B cell (primary cell): ENCODE measurements at regions of chr7 and their contacts with region 1.

Region 1: GRCh38 chr7:149090397-149091195 is at the start of gene ZNF786:
- DNase-seq: peak; percentile 95
- ATAC-seq: peak; percentile 86
- H3K4me3 ChIP-seq: peak within 1 kb of the TSS; percentile 72 to 96 (median 80)
- H3K4me3 Mint-ChIP-seq: peak within 1 kb of the TSS; percentile 95
- H3K27ac ChIP-seq: peak within 1 kb of the TSS; percentile 90 to 93
- H3K27ac Mint-ChIP-seq: peak within 1 kb of the TSS; percentile 99
- H3K4me1 ChIP-seq: peaks cover 0 to 20% of the 10 kb centered on the region in 2 donors
- H3K4me1 Mint-ChIP-seq: peaks cover 28% of the 10 kb centered on the region
- H3K27me3 ChIP-seq: no peaks in the 10 kb centered on the region
- H3K27me3 Mint-ChIP-seq: no peaks in the 10 kb centered on the region
- CTCF ChIP-seq: peak; percentile 86
- total RNA-seq, gene ZNF786: 14.7 and 18.0 TPM in 2 replicates

Region 2: DNA sequence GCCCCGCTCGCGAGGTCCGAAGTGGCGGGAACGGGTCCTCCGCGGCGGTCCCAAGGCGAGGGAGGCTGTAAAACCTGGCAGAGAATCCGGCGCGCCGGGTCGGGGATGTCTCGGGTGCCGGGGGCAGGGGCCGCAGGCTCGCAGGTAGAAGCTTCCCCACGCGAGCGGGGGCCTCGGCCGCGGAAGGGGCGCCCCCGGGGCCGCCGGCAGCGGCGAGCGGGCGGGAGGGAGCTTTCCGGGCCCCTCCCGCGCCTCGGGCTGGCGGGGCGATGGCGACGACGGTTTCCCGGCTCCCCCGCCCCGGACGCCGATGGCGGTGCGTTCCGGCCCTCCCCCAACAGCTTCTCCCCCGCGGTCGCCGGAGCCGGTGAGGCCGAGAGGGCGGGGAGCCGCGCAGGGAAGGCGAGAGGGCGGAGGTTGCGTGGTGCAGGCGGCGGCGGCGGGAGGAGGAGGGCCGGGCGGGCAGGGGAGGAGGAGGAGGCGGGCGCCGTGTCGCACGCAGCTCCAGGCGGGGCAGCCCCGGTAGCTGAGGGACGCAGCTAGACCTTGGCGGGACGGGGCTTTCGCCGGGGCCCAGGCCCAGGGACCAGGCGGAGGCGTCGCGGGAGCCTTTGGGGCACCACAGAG is 392.1 kb before region 1 on chr7 and contains the start of gene CUL1:
- CTCF ChIA-PET with region 1: no interaction called
- POLR2A ChIA-PET with region 1: no interaction called
- intact Hi-C with region 1: loop called (anchors 5 kb)
- DNase-seq: peak; percentile 90
- ATAC-seq: peak; percentile 81
- H3K4me3 ChIP-seq: peak within 1 kb of the TSS; percentile 76 to 93 (median 84)
- H3K4me3 Mint-ChIP-seq: peak within 1 kb of the TSS; percentile 91
- H3K27ac ChIP-seq: peak within 1 kb of the TSS; percentile 69 to 91
- H3K27ac Mint-ChIP-seq: peak within 1 kb of the TSS; percentile 92
- H3K4me1 ChIP-seq: peaks cover 30 to 31% of the 10 kb centered on the region in 2 donors
- H3K4me1 Mint-ChIP-seq: peaks cover 46% of the 10 kb centered on the region
- H3K27me3 ChIP-seq: no peaks in the 10 kb centered on the region
- H3K27me3 Mint-ChIP-seq: no peaks in the 10 kb centered on the region
- CTCF ChIP-seq: no peak
- total RNA-seq, gene CUL1: 51.1 and 53.5 TPM in 2 replicates

Region 3: DNA sequence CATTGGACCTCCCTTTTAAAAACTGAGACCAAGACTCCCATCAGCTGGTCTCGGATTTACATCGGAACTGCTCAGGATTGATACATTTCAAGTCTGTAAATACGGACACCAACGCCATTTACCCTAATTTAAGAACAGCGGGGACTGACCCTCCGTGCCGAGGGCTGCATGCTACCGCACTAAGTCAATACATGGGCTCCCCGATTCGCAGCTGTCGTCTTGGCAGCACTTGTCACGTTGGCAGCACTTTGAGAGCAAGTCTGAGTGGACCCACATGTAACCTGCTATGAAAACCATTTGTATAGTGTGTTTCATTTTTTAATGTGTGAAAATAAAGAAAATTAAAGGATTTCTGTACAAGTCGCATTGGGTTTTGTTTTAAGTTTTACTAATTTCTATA is 289.9 kb before region 1 on chr7:
- CTCF ChIA-PET with region 1: no interaction called
- POLR2A ChIA-PET with region 1: no interaction called
- intact Hi-C with region 1: no loop called
- DNase-seq: no peak
- ATAC-seq: no peak
- H3K4me3 ChIP-seq: no peak overlapping the region
- H3K4me3 Mint-ChIP-seq: no peak overlapping the region
- H3K27ac ChIP-seq: no peak overlapping the region
- H3K27ac Mint-ChIP-seq: no peak overlapping the region
- H3K4me1 ChIP-seq: no peaks in the 10 kb centered on the region
- H3K4me1 Mint-ChIP-seq: no peaks in the 10 kb centered on the region
- H3K27me3 ChIP-seq: no peaks in the 10 kb centered on the region
- H3K27me3 Mint-ChIP-seq: no peaks in the 10 kb centered on the region
- CTCF ChIP-seq: no peak

Region 4: GRCh38 chr7:148987010-148987750 is 103.4 kb before region 1 on chr7:
- CTCF ChIA-PET with region 1: no interaction called
- POLR2A ChIA-PET with region 1: interaction called, 3 read pairs
- intact Hi-C with region 1: loop called (anchors 1 kb)
- DNase-seq: peak; percentile 92
- ATAC-seq: peak; percentile 87
- H3K4me3 ChIP-seq: peak overlapping the region; percentile 78 to 98 (median 89)
- H3K4me3 Mint-ChIP-seq: peak overlapping the region; percentile 99
- H3K27ac ChIP-seq: peak overlapping the region; percentile 84 to 90
- H3K27ac Mint-ChIP-seq: peak overlapping the region; percentile 94
- H3K4me1 ChIP-seq: peaks cover 39 to 43% of the 10 kb centered on the region in 2 donors
- H3K4me1 Mint-ChIP-seq: peaks cover 49% of the 10 kb centered on the region
- H3K27me3 ChIP-seq: no peaks in the 10 kb centered on the region
- H3K27me3 Mint-ChIP-seq: no peaks in the 10 kb centered on the region
- CTCF ChIP-seq: no peak

Region 5: DNA sequence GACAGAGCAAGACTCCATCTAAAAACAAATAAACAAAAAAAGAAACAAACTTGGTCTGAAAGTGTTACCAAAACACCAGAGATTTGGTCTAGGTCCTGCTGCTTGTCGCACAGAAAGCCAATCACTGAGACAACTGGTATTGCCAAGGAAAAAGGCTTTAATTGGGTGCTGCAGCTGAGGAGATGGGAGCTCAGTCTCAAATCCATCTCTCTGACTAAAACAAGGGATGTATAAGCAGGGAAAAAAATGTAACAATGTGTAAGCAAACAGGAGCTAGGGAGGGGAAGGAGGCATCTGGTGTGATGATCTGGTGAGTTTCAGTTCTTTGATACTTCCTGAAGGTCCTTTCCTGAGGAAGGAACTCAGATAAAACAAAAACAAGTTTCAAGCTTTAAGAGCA is 53.9 kb before region 1 on chr7:
- CTCF ChIA-PET with region 1: no interaction called
- POLR2A ChIA-PET with region 1: interaction called, 13 read pairs
- intact Hi-C with region 1: no loop called
- DNase-seq: no peak
- ATAC-seq: no peak
- H3K4me3 ChIP-seq: no peak overlapping the region
- H3K4me3 Mint-ChIP-seq: no peak overlapping the region
- H3K27ac ChIP-seq: no peak overlapping the region
- H3K27ac Mint-ChIP-seq: no peak overlapping the region
- H3K4me1 ChIP-seq: no peaks in the 10 kb centered on the region
- H3K4me1 Mint-ChIP-seq: no peaks in the 10 kb centered on the region
- H3K27me3 ChIP-seq: no peaks in the 10 kb centered on the region
- H3K27me3 Mint-ChIP-seq: peaks cover 6% of the 10 kb centered on the region
- CTCF ChIP-seq: no peak

Region 6: DNA sequence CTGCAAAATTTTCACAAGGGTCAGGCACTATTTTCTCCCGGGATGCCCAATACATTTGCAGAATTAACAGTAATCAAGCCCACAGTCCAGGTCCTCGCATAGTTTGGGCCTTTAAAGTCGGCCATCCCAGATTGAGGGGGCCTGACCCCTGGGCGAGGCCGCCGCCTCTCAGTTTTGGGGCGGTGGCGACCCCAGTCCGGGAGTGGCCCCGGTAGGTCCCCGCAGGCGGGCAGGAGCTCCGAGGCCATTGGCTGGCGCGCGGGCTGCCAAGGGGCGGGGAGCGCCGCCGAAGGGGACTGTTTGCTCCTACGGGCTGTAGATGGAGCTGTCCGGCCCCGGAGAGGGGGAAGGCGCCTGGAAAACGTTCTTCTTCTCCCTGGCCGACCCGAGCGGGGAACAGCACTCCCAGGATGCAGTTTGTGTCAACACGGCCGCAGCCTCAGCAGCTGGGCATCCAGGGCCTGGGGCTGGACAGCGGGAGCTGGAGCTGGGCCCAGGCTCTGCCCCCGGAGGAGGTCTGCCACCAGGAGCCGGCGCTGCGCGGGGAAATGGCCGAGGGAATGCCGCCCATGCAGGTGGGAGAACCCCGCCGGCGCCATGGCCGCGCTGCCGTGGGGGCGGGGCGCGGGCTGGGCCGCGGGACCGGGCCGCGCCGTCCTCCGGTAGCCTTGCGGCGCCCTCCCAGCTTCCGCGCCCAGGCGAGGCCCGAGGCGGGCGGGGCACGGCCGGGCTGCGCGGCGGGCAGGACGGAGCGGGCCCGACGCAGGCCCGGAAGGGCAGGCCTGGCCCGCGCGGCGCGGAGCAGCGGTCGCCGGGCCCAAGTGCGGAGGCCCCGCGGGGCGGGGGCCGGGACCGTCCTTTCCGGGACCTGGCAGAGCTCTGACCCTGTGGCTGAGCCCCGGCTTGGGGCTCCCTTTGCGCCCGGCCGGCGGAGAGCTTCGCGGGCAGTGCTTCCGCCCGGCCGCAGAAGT is 104.9 kb after region 1 on chr7 and contains the start of gene ZNF282:
- CTCF ChIA-PET with region 1: no interaction called
- POLR2A ChIA-PET with region 1: no interaction called
- intact Hi-C with region 1: loop called (anchors 5 kb)
- DNase-seq: peak; percentile 81
- ATAC-seq: peak; percentile 84
- H3K4me3 ChIP-seq: peak within 1 kb of the TSS; percentile 60 to 92 (median 83)
- H3K4me3 Mint-ChIP-seq: peak within 1 kb of the TSS; percentile 89
- H3K27ac ChIP-seq: peak within 1 kb of the TSS; percentile 47 to 76
- H3K27ac Mint-ChIP-seq: peak within 1 kb of the TSS; percentile 81
- H3K4me1 ChIP-seq: peaks cover 14 to 18% of the 10 kb centered on the region in 2 donors
- H3K4me1 Mint-ChIP-seq: peaks cover 38% of the 10 kb centered on the region
- H3K27me3 ChIP-seq: no peaks in the 10 kb centered on the region
- H3K27me3 Mint-ChIP-seq: no peaks in the 10 kb centered on the region
- CTCF ChIP-seq: peak; percentile 58
- total RNA-seq, gene ZNF282: 25.7 and 26.8 TPM in 2 replicates

Region 7: DNA sequence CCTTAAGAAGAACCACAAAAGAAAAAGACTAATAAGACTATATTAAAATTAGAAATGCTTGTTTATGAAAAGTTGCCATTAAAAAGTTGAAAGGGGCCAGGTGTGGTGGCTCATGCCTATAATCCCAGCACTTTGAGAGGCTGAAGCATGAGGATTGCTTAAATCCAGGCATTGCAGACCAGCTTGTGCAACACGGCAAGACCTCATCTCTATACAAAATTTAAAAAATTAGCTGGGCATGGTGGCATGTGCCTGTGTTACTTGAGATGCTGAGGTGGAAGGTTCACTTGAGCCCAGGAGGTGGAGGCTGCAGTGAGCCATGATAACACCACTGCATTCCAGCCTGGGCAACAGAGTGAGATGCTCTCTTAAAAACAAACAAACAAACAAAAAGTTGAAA is 301.9 kb after region 1 on chr7:
- CTCF ChIA-PET with region 1: no interaction called
- POLR2A ChIA-PET with region 1: no interaction called
- intact Hi-C with region 1: no loop called
- DNase-seq: no peak
- ATAC-seq: no peak
- H3K4me3 ChIP-seq: no peak overlapping the region
- H3K4me3 Mint-ChIP-seq: no peak overlapping the region
- H3K27ac ChIP-seq: no peak overlapping the region
- H3K27ac Mint-ChIP-seq: no peak overlapping the region
- H3K4me1 ChIP-seq: no peaks in the 10 kb centered on the region
- H3K4me1 Mint-ChIP-seq: no peaks in the 10 kb centered on the region
- H3K27me3 ChIP-seq: peaks cover 0 to 3% (median 1%) of the 10 kb centered on the region in 4 experiments
- H3K27me3 Mint-ChIP-seq: peaks cover 48% of the 10 kb centered on the region
- CTCF ChIP-seq: no peak